ENCODE measurements at regions of chr17 and their contacts with region 1.

Region 1: GRCh38 chr17:44210342-44211192 is 8.9 kb downstream of the UBTF start:
- DNase-seq: peak; percentile 94
- H3K4me3 Mint-ChIP-seq: peak overlapping the region; percentile 60
- H3K27ac Mint-ChIP-seq: peak overlapping the region; percentile 83
- H3K4me1 Mint-ChIP-seq: peaks cover 53% of the 10 kb centered on the region
- H3K27me3 Mint-ChIP-seq: no peaks in the 10 kb centered on the region

Region 2: GRCh38 chr17:44199553-44200477 is 10.8 kb before region 1 on chr17 and contains the start of gene ATXN7L3:
- CTCF ChIA-PET with region 1: interaction called, 27 read pairs
- POLR2A ChIA-PET with region 1: interaction called, 504 read pairs
- DNase-seq: peak; percentile 100
- H3K4me3 Mint-ChIP-seq: peak within 1 kb of the TSS; percentile 90
- H3K27ac Mint-ChIP-seq: peak within 1 kb of the TSS; percentile 95
- H3K4me1 Mint-ChIP-seq: peaks cover 59% of the 10 kb centered on the region
- H3K27me3 Mint-ChIP-seq: no peaks in the 10 kb centered on the region
- total RNA-seq, gene ATXN7L3: 106 to 107 TPM

Region 3: DNA sequence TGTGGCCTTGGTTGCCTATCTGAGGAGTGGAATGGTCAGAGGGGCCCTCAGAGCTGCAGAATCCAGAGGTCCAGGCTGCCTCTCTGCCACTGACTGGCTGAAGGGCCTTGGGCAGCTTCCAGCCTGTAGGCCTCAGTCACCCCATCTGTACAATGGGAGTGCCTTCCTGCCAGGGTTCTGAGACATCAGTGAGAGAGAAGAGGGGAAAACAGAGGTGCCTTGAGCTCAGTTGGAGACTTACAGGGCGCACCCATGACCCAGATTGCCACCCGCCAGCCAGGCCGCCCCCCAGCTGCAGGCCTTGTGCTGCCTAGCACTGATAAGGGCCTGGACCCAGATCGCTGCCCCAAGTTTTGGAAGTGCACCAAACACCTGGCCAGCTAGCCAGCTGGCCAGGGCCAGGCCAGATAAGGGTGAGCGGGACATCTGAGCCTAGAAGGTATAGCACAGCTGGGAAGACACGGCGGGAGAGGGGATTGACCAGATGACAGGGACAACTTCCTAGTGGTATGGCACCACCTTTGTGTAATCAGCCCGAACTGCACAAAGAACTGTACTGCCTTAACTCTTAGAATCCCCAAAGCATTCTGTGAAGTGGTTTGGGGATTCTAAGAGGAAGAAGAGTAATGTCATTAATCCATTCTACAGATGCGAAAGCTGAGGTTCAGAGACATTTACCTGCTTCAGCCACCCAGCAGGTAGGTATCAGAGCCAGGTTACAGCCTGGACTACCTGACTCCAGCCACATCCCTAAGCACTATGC is 56.0 kb after region 1 on chr17:
- CTCF ChIA-PET with region 1: no interaction called
- POLR2A ChIA-PET with region 1: no interaction called
- DNase-seq: no peak
- H3K4me3 Mint-ChIP-seq: no peak overlapping the region
- H3K27ac Mint-ChIP-seq: no peak overlapping the region
- H3K4me1 Mint-ChIP-seq: no peaks in the 10 kb centered on the region
- H3K27me3 Mint-ChIP-seq: no peaks in the 10 kb centered on the region

Region 4: GRCh38 chr17:44324571-44325275 is 114.2 kb after region 1 on chr17 and contains the start of gene SLC25A39:
- CTCF ChIA-PET with region 1: interaction called, 65 read pairs
- POLR2A ChIA-PET with region 1: interaction called, 117 read pairs
- DNase-seq: peak; percentile 95
- H3K4me3 Mint-ChIP-seq: peak within 1 kb of the TSS; percentile 87
- H3K27ac Mint-ChIP-seq: peak within 1 kb of the TSS; percentile 97
- H3K4me1 Mint-ChIP-seq: peaks cover 28% of the 10 kb centered on the region
- H3K27me3 Mint-ChIP-seq: no peaks in the 10 kb centered on the region
- total RNA-seq, gene SLC25A39: 72.6 to 77.0 TPM

Region 5: GRCh38 chr17:44331249-44331760 is 120.7 kb after region 1 on chr17:
- CTCF ChIA-PET with region 1: interaction called, 65 read pairs
- POLR2A ChIA-PET with region 1: interaction called, 117 read pairs
- DNase-seq: peak; percentile 74
- H3K4me3 Mint-ChIP-seq: no peak overlapping the region
- H3K27ac Mint-ChIP-seq: peak overlapping the region; percentile 32
- H3K4me1 Mint-ChIP-seq: peaks cover 16% of the 10 kb centered on the region
- H3K27me3 Mint-ChIP-seq: peaks cover 2% of the 10 kb centered on the region

Region 6: GRCh38 chr17:44344939-44345453 is 134.4 kb after region 1 on chr17 and contains the start of gene GRN:
- CTCF ChIA-PET with region 1: interaction called, 14 read pairs
- POLR2A ChIA-PET with region 1: interaction called, 7 read pairs
- DNase-seq: peak; percentile 89
- H3K4me3 Mint-ChIP-seq: peak within 1 kb of the TSS; percentile 84
- H3K27ac Mint-ChIP-seq: peak within 1 kb of the TSS; percentile 44
- H3K4me1 Mint-ChIP-seq: peaks cover 30% of the 10 kb centered on the region
- H3K27me3 Mint-ChIP-seq: peaks cover 12% of the 10 kb centered on the region
- total RNA-seq, gene GRN: 87.8 to 98.4 TPM

Region 7: DNA sequence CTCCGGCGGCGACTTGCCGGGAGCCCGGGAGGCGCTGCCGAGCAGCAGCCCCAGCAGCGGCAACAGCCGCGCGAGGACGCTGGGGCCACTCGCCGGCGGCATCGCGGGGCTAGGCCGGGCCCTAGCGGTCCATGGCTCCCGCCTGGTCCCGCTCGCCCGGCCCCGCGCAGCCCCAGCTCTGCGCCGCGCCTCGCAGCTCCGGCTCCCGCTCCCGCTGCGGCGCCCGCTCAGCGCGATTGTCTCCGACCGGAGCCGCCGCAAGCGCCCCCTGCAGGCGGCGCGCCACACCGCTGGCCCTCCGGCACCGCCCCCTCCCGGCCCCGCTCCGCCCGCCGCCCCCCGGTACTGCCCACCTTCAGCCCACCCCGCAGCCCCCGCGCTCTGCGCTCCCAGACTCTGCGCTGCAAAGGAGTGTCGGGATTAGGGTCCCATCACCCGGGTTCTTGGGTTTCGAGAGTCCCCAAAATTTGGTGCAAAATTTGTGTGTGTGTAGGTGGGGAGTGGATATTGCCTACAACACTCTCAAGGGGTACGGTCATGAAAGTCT is 153.1 kb after region 1 on chr17 and contains the start of gene FAM171A2:
- CTCF ChIA-PET with region 1: interaction called, 11 read pairs
- POLR2A ChIA-PET with region 1: interaction called, 3 read pairs
- DNase-seq: peak; percentile 68
- H3K4me3 Mint-ChIP-seq: peak within 1 kb of the TSS; percentile 70
- H3K27ac Mint-ChIP-seq: no peak within 1 kb of the TSS
- H3K4me1 Mint-ChIP-seq: peaks cover 3% of the 10 kb centered on the region
- H3K27me3 Mint-ChIP-seq: peaks cover 44% of the 10 kb centered on the region
- total RNA-seq, gene FAM171A2: 0.10 TPM in 1 of 2 experiments, not detected in the other